Activated CD8-positive, alpha-beta T cell treated with anti-CD3 and anti-CD28 coated beads for 36 hours (primary cell): ENCODE measurements at regions of chr5 and their contacts with region 1.

Region 1: DNA sequence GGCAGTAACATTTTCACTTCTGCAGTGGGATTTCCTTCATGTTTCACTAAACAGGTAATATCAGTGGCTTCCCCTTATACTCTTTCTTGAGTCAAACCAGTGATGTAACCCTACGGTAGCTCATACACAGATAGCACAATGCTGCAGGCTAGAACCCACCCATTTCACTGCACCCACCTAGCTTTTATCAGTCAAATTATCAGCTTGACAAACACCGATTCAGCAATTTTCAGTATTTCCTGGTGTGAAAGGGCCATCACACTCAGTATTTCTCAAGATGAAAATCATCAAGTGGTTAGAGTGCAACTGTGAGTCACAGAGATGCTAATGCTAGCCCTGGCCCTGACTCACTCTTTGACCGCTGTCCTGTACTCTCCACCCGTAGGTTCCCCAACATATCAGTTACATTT is 242.3 kb upstream of the PTGER4 start:
- DNase-seq: peak; percentile 63
- ATAC-seq: peak; percentile 72
- H3K4me3 Mint-ChIP-seq: peak overlapping the region; percentile 19
- H3K27ac Mint-ChIP-seq: peak overlapping the region; percentile 86
- H3K4me1 Mint-ChIP-seq: peaks cover 81% of the 10 kb centered on the region
- H3K27me3 Mint-ChIP-seq: no peaks in the 10 kb centered on the region
- CTCF ChIP-seq: no peak

Region 2: DNA sequence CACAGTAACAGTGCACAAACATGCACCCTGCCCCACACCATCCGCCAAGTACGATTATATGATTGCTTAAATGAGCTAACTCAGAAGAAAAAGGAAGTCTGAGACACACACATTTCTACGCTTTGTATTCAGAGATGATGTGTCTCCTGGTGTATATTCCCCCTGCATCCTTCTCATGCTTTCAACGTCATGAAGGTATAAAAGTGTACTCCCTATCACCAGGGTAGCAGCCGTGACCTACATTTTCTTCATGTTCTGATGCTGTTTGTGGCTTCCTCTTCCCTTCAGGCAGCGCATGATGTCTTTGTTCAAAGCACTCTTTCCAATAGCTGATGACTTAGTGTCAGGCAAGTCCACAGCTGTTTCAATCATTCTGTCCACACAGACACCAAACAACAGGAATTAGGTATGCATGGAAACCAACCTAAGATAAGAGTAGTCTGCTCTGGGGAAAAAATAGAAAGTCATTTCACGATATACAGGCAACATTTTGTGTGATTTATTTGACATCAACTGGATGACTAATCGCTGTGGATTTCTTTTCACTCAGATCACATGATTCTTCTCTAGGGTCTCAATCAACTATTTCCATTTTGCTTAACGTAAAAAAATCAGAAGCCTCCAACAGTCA is 27.1 kb before region 1 on chr5:
- CTCF ChIA-PET with region 1: interaction called, 19 read pairs
- POLR2A ChIA-PET with region 1: interaction called, 12 read pairs
- intact Hi-C with region 1: loop called (anchors 2 kb)
- DNase-seq: peak; percentile 80
- ATAC-seq: peak; percentile 83
- H3K4me3 Mint-ChIP-seq: peak overlapping the region; percentile 62
- H3K27ac Mint-ChIP-seq: peak overlapping the region; percentile 93
- H3K4me1 Mint-ChIP-seq: peaks cover 63% of the 10 kb centered on the region
- H3K27me3 Mint-ChIP-seq: no peaks in the 10 kb centered on the region
- CTCF ChIP-seq: no peak

Region 3: DNA sequence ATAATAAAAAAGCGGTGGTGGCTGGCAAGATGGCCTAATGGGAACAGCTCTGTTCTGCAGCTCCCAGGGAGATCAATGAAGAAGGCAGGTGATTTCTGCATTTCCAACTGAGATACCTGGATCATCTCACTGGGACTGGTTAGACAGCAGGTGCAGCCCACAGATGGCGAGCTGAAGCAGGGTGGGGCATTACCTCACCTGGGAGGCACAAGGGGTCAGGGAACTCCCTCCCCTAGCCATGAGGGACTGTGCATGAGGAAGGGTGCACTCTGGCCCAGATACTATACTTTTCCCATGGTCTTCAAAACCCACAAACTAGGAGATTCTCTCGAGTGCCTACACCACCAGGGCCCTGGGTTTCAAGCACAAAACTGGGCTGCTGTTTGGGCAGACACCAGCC is 196.7 kb after region 1 on chr5:
- CTCF ChIA-PET with region 1: no interaction called
- POLR2A ChIA-PET with region 1: no interaction called
- intact Hi-C with region 1: no loop called
- DNase-seq: no peak
- ATAC-seq: no peak
- H3K4me3 Mint-ChIP-seq: no peak overlapping the region
- H3K27ac Mint-ChIP-seq: no peak overlapping the region
- H3K4me1 Mint-ChIP-seq: peaks cover 11% of the 10 kb centered on the region
- H3K27me3 Mint-ChIP-seq: no peaks in the 10 kb centered on the region
- CTCF ChIP-seq: no peak